ENCODE measurements at regions of chr7 and their contacts with region 1.

Region 1: GRCh38 chr7:54788664-54789063 is 29.7 kb upstream of the SEC61G start:
- DNase-seq: no peak

Region 2: DNA sequence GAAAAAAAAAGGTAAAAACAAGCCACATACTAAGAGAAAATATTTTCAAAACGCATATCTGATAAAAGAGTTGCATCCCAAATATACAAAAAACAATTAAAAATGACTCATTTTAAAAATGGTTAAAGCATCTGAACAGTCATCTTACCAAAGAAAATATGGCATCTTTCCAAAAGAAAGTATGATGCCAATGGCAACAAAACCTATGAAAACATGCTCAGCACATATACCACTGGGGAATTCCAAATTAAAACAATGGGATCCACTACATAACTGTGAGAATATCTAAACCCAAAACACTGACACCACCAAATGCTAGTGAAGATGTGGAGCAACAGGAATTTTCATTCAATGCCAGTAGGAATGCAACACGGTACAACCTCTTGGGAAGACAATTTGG is 207.2 kb before region 1 on chr7:
- intact Hi-C with region 1: no loop called
- DNase-seq: no peak

Region 3: GRCh38 chr7:54839538-54840213 is 51.0 kb after region 1 on chr7:
- intact Hi-C with region 1: loop called (anchors 2 kb)
- DNase-seq: peak; percentile 79

Measured in cardiac septum (tissue), 1 donor.